Activated T-helper 1 cell treated with anti-CD3 and anti-CD28 coated beads, Interleukin-12 subunit alpha, Interleukin-12 subunit beta, Interleukin-2, Interleukin-4 antibody, amounts not matched to agents 30 ng/mL and 10 ng/mL and 1 ng/mL, durations not matched to agents 14 hours and 24 hours and 36 hours (primary cell): ENCODE measurements at regions of chr12 and their contacts with region 1.

Region 1: DNA sequence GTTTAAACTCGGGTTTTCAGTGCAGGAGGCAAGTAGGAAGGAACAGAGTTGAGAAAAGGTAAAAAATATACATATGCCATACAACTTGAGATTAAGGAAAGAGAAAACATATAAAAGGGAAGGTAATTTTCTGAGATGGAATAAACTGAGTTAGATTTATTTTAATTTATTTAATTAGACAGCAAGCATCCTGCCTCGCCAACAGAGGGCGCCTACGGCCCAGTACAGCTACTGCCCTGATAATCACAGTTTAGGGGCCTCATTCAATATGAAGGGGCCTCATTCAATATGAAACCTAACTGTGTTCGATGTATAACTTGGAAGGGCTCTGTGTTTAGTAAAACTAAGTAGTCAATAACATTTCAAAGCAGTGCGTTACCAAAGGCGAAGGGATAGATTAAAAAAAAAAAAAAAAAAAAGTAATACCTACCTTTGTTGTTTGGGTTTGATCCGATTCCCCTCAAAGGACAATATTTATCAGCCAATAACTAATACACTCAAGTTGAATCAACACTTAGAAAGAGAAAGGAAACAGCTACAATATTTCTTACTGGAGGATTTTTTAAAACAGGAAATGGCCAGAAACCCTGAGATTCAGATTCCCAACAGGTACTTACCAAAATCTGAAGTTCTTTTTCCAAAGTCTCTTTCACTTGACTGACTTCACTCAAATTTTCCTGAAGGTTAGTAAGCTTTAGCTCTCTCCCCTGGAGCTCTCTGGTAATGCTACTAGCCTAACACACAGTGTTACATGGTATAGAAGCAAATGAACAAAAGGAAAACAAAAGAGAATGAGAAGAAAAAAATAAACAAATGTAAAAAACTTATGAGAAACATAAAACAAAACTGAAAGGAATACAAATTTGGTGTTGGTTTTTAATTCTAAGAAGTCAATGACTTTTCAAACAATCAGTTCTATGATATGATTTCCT is 70.0 kb upstream of the VPS33A start:
- DNase-seq: no peak
- H3K4me3 Mint-ChIP-seq: no peak overlapping the region
- H3K27ac Mint-ChIP-seq: peak overlapping the region; percentile 53
- H3K4me1 Mint-ChIP-seq: peaks cover 18% of the 10 kb centered on the region
- H3K27me3 Mint-ChIP-seq: no peaks in the 10 kb centered on the region

Region 2: GRCh38 chr12:122200541-122201175 is 135.6 kb before region 1 on chr12:
- intact Hi-C with region 1: no loop called
- DNase-seq: no peak
- H3K4me3 Mint-ChIP-seq: no peak overlapping the region
- H3K27ac Mint-ChIP-seq: no peak overlapping the region
- H3K4me1 Mint-ChIP-seq: peaks cover 11% of the 10 kb centered on the region
- H3K27me3 Mint-ChIP-seq: peaks cover 32% of the 10 kb centered on the region

Region 3: GRCh38 chr12:122356192-122356635 is 19.9 kb after region 1 on chr12:
- intact Hi-C with region 1: loop called (anchors 1 kb)
- DNase-seq: peak; percentile 36
- H3K4me3 Mint-ChIP-seq: no peak overlapping the region
- H3K27ac Mint-ChIP-seq: no peak overlapping the region
- H3K4me1 Mint-ChIP-seq: peaks cover 6% of the 10 kb centered on the region
- H3K27me3 Mint-ChIP-seq: no peaks in the 10 kb centered on the region

Region 4: GRCh38 chr12:122421821-122422729 is 85.8 kb after region 1 on chr12 and contains the start of gene CLIP1:
- intact Hi-C with region 1: loop called (anchors 5 kb)
- DNase-seq: peak; percentile 57
- H3K4me3 Mint-ChIP-seq: peak within 1 kb of the TSS; percentile 94
- H3K27ac Mint-ChIP-seq: peak within 1 kb of the TSS; percentile 89
- H3K4me1 Mint-ChIP-seq: peaks cover 33% of the 10 kb centered on the region
- H3K27me3 Mint-ChIP-seq: peaks cover 2% of the 10 kb centered on the region
- total RNA-seq, gene CLIP1: 64.1 and 71.9 TPM in 2 replicates